A673 (cell line): ENCODE measurements at regions of chr10 and their contacts with region 1.

Region 1: GRCh38 chr10:3239066-3239919 is 66.7 kb upstream of the PITRM1 start:
- DNase-seq: peak; percentile 66
- H3K4me3 ChIP-seq: no peak overlapping the region
- H3K27ac ChIP-seq: no peak overlapping the region
- H3K4me1 ChIP-seq: peaks cover 6% of the 10 kb centered on the region
- H3K27me3 ChIP-seq: no peaks in the 10 kb centered on the region
- CTCF ChIP-seq: peak; percentile 91

Region 2: GRCh38 chr10:3251172-3251571 is 11.9 kb after region 1 on chr10:
- CTCF ChIA-PET with region 1: no interaction called
- POLR2A ChIA-PET with region 1: no interaction called
- intact Hi-C with region 1: no loop called
- DNase-seq: no peak
- H3K4me3 ChIP-seq: no peak overlapping the region
- H3K27ac ChIP-seq: no peak overlapping the region
- H3K4me1 ChIP-seq: peaks cover 11% of the 10 kb centered on the region
- H3K27me3 ChIP-seq: peaks cover 3% of the 10 kb centered on the region
- CTCF ChIP-seq: no peak

Region 3: GRCh38 chr10:3559542-3559941 is 320.2 kb after region 1 on chr10:
- CTCF ChIA-PET with region 1: no interaction called
- POLR2A ChIA-PET with region 1: no interaction called
- intact Hi-C with region 1: loop called (anchors 5 kb)
- DNase-seq: no peak
- H3K4me3 ChIP-seq: no peak overlapping the region
- H3K27ac ChIP-seq: no peak overlapping the region
- H3K4me1 ChIP-seq: no peaks in the 10 kb centered on the region
- H3K27me3 ChIP-seq: no peaks in the 10 kb centered on the region
- CTCF ChIP-seq: no peak

Region 4: GRCh38 chr10:3668276-3668965 is 429.1 kb after region 1 on chr10:
- CTCF ChIA-PET with region 1: no interaction called
- POLR2A ChIA-PET with region 1: no interaction called
- intact Hi-C with region 1: loop called (anchors 5 kb)
- DNase-seq: peak; percentile 72
- H3K4me3 ChIP-seq: no peak overlapping the region
- H3K27ac ChIP-seq: peak overlapping the region; percentile 68
- H3K4me1 ChIP-seq: peaks cover 44% of the 10 kb centered on the region
- H3K27me3 ChIP-seq: no peaks in the 10 kb centered on the region
- CTCF ChIP-seq: no peak

Region 5: GRCh38 chr10:3740157-3740871 is 501.0 kb after region 1 on chr10:
- CTCF ChIA-PET with region 1: no interaction called
- POLR2A ChIA-PET with region 1: no interaction called
- intact Hi-C with region 1: no loop called
- DNase-seq: peak; percentile 46
- H3K4me3 ChIP-seq: no peak overlapping the region
- H3K27ac ChIP-seq: no peak overlapping the region
- H3K4me1 ChIP-seq: peaks cover 29% of the 10 kb centered on the region
- H3K27me3 ChIP-seq: no peaks in the 10 kb centered on the region
- CTCF ChIP-seq: no peak